ENCODE measurements at regions of chr20 and their contacts with region 1.

Region 1: GRCh38 chr20:46349035-46349741 is 40.9 kb upstream of the CDH22 start:
- DNase-seq: peak; percentile 41 to 81 (median 55)
- ATAC-seq: peak; percentile 47 to 80 (median 71)
- H3K4me3 ChIP-seq: peak overlapping the region in 4 of 12 donors; percentile 14 to 34 (median 20)
- H3K27ac ChIP-seq: peak overlapping the region in 1 of 12 donors; percentile 0
- H3K4me1 ChIP-seq: peaks cover 0 to 22% (median 9%) of the 10 kb centered on the region in 12 donors
- H3K27me3 ChIP-seq: no peaks in the 10 kb centered on the region
- CTCF ChIP-seq: peak; percentile 65 to 83 (median 77)
- POLR2A ChIP-seq: no peak

Region 2: GRCh38 chr20:46307139-46307998 is 41.8 kb before region 1 on chr20:
- intact Hi-C with region 1: loop called in 1 of 10 experiments (anchors 2 kb)
- DNase-seq: peak; percentile 18 to 82 (median 42)
- ATAC-seq: peak in 3 of 4 donors; percentile 51 to 64 (median 62)
- H3K4me3 ChIP-seq: peak overlapping the region; percentile 22 to 59 (median 45)
- H3K27ac ChIP-seq: no peak overlapping the region
- H3K4me1 ChIP-seq: peaks cover 0 to 27% (median 8%) of the 10 kb centered on the region in 12 donors
- H3K27me3 ChIP-seq: peaks cover 33 to 97% (median 71%) of the 10 kb centered on the region in 9 donors
- CTCF ChIP-seq: peak; percentile 51 to 78 (median 65)
- POLR2A ChIP-seq: no peak